ENCODE measurements at regions of chr12 and their contacts with region 1.

Region 1: DNA sequence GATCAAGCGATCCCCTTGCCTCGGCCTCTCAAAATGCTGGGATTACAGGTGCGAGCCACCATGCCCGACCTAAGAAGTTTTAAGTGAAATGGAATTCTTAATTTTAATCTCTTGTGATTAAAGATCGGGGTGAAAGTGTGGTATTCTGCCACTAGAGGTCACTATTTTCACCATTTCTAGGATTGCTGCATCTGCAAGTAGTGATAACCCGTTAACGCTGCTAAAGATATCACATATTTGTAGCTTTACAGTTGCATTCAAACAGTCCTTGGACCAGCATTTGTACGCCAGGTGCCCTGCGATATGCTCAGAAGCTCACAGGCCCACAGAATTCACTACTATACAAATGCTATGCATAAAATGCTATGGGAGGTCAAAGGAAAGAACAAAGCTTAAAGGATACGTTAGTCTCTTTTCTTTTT is 19.3 kb downstream of the CCDC62 start:
- DNase-seq: peak in 1 of 7 donors; percentile 13
- H3K4me3 ChIP-seq: no peak overlapping the region
- H3K27ac ChIP-seq: no peak overlapping the region
- H3K4me1 ChIP-seq: peaks cover 0 to 3% of the 10 kb centered on the region in 2 donors
- H3K27me3 ChIP-seq: no peaks in the 10 kb centered on the region
- CTCF ChIP-seq: peak; percentile 53 to 83 (median 70)
- POLR2A ChIP-seq: no peak

Region 2: DNA sequence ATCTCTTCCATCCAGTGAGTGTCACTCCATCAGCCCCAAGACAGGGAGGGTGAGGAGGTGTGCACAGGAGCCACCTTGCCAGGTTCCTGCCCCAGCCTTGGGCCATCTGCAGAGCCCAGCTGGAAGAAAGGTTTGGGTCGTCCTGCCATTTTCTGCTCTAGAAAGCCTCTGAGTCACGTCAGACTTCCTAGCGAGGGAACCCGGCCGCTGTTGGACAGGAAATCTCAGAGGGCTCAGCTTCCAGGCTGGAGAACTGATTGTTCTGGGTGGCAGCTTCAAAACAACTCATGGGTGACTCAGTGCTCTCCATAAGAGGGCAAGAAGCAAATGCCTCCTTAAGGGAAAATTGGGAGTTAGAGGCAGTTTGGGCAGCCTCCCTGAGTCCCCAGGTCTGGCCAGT is 58.1 kb after region 1 on chr12:
- intact Hi-C with region 1: loop called in 1 of 2 experiments (anchors 10 kb)
- DNase-seq: peak in 5 of 7 donors; percentile 47 to 80 (median 71)
- H3K4me3 ChIP-seq: no peak overlapping the region
- H3K27ac ChIP-seq: peak overlapping the region in 3 of 5 donors; percentile 26 to 68 (median 59)
- H3K4me1 ChIP-seq: peaks cover 11 to 17% of the 10 kb centered on the region in 2 donors
- H3K27me3 ChIP-seq: no peaks in the 10 kb centered on the region
- CTCF ChIP-seq: no peak
- POLR2A ChIP-seq: no peak

Region 3: DNA sequence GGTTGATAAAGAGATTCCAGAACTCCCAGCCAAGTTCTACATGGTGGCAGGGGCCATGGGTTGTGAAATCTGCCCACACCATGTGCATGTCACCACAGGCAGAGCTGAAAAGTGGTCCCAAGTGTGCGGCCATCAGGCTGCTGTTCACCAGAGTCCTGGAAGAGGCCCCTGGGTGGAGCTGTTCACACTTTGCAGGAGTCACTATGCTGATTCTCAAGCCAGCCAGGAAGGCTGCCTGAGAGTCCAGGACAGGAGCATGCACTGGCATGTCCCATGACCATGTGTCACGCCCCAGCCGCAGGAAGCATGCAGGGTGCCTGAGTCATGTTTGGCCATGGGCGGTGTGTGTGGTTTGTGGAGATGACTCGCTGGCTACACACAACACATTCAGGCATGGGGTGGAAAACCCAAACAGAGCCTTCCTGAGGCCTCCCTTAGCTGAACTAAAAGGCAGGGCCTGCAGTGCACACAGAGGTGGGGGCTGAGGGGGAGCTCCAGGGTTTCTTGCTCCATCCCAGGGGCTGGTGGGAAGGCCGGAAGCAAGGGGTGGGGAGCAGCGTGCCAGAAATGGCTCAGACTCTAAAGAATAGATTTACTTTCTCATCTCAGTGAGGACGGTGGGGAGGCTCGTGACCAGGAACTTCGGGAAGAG is 153.1 kb after region 1 on chr12:
- intact Hi-C with region 1: loop called (anchors 5 to 10 kb)
- DNase-seq: peak; percentile 83 to 98 (median 96)
- H3K4me3 ChIP-seq: no peak overlapping the region
- H3K27ac ChIP-seq: peak overlapping the region in 4 of 5 donors; percentile 45 to 85 (median 76)
- H3K4me1 ChIP-seq: peaks cover 23 to 25% of the 10 kb centered on the region in 2 donors
- H3K27me3 ChIP-seq: no peaks in the 10 kb centered on the region
- CTCF ChIP-seq: peak in 5 of 6 experiments; percentile 12 to 30 (median 19)
- POLR2A ChIP-seq: peak; percentile 37 to 67

Region 4: GRCh38 chr12:122951979-122952892 is 158.5 kb after region 1 on chr12:
- intact Hi-C with region 1: loop called (anchors 5 to 10 kb)
- DNase-seq: peak; percentile 73 to 91 (median 81)
- H3K4me3 ChIP-seq: no peak overlapping the region
- H3K27ac ChIP-seq: no peak overlapping the region
- H3K4me1 ChIP-seq: peaks cover 2% of the 10 kb centered on the region in 2 donors
- H3K27me3 ChIP-seq: no peaks in the 10 kb centered on the region
- CTCF ChIP-seq: peak; percentile 67 to 96 (median 92)
- POLR2A ChIP-seq: no peak

Measured in adrenal gland (tissue), 19 donors.